Activated CD4-positive, alpha-beta T cell treated with anti-CD3 and anti-CD28 coated beads for 36 hours (primary cell): ENCODE measurements at regions of chr7 and their contacts with region 1.

Region 1: GRCh38 chr7:42479816-42480633 is 243.0 kb upstream of the GLI3 start:
- DNase-seq: no peak
- ATAC-seq: no peak
- H3K4me3 Mint-ChIP-seq: no peak overlapping the region
- H3K27ac Mint-ChIP-seq: no peak overlapping the region
- H3K4me1 Mint-ChIP-seq: no peaks in the 10 kb centered on the region
- H3K27me3 Mint-ChIP-seq: peaks cover 8% of the 10 kb centered on the region

Region 2: GRCh38 chr7:42372479-42372878 is 107.5 kb before region 1 on chr7:
- CTCF ChIA-PET with region 1: no interaction called
- POLR2A ChIA-PET with region 1: no interaction called
- intact Hi-C with region 1: no loop called
- DNase-seq: no peak
- ATAC-seq: no peak
- H3K4me3 Mint-ChIP-seq: no peak overlapping the region
- H3K27ac Mint-ChIP-seq: no peak overlapping the region
- H3K4me1 Mint-ChIP-seq: no peaks in the 10 kb centered on the region
- H3K27me3 Mint-ChIP-seq: peaks cover 6% of the 10 kb centered on the region

Region 3: DNA sequence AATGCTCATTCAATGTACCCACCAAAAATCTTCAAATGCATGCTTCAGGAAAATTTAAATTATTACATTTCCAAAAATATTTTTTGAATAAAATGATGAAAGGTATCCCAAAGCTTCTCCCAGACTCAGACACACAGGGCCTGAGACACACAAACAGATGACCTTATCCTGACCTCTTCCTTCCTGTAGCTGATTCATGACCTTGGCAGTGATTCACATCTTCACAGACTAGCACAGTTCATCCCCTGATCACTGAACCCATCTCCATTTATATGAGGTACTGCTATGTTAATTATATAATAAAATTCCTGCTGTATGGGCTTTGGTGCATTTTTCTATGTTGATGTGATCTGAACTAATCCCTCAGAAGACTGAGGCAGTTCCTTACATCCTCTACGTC is 22.0 kb after region 1 on chr7:
- CTCF ChIA-PET with region 1: no interaction called
- POLR2A ChIA-PET with region 1: no interaction called
- intact Hi-C with region 1: no loop called
- DNase-seq: no peak
- ATAC-seq: no peak
- H3K4me3 Mint-ChIP-seq: no peak overlapping the region
- H3K27ac Mint-ChIP-seq: no peak overlapping the region
- H3K4me1 Mint-ChIP-seq: no peaks in the 10 kb centered on the region
- H3K27me3 Mint-ChIP-seq: peaks cover 3% of the 10 kb centered on the region

Region 4: DNA sequence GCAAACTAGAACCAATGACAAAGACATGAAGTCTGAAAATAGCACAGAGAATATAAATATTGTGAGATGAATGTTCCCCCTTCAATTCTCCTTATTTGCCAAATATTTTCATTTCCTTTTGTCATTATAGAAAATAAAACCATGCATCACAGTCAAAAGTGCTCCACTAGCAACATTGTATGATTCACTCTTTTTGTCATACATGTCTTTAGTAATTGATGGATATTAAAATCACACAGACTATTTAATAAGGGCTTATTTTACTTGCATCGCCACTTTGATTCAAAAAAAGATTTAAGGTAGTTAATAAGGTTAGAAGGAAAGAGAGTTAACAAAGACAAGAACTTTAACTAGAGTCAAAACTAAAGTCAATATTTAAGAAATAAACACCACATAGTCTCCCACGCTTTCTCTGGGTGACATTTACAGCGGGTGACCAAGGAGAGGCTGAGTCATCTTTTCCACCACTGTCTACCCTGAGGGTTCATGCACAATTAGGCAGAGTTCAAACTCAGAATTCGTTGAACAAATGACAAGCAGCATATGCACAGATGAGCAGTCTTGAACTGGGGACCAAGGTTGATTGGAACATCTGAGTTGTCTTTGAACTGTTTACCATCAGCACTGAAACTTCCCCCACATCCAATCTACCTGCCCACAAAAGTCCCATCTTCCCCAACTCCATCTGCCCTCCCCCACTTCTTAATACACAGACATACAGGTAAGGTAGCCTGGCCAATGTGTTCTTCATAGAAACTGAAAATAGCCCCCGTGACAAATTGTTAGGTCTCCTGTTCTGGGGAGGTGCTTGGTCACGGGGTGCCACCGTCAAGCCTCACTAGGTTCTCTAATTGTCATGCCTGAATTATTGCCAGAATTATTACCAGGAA is 389.4 kb after region 1 on chr7:
- CTCF ChIA-PET with region 1: no interaction called
- POLR2A ChIA-PET with region 1: no interaction called
- intact Hi-C with region 1: loop called in 1 of 2 experiments (anchors 10 kb)
- DNase-seq: peak; percentile 76
- ATAC-seq: peak; percentile 96
- H3K4me3 Mint-ChIP-seq: peak overlapping the region; percentile 1
- H3K27ac Mint-ChIP-seq: peak overlapping the region; percentile 53
- H3K4me1 Mint-ChIP-seq: peaks cover 20% of the 10 kb centered on the region
- H3K27me3 Mint-ChIP-seq: peaks cover 17% of the 10 kb centered on the region